Motor neuron (in vitro differentiated cells): ENCODE measurements at regions of chr9 and their contacts with region 1.

Region 1: DNA sequence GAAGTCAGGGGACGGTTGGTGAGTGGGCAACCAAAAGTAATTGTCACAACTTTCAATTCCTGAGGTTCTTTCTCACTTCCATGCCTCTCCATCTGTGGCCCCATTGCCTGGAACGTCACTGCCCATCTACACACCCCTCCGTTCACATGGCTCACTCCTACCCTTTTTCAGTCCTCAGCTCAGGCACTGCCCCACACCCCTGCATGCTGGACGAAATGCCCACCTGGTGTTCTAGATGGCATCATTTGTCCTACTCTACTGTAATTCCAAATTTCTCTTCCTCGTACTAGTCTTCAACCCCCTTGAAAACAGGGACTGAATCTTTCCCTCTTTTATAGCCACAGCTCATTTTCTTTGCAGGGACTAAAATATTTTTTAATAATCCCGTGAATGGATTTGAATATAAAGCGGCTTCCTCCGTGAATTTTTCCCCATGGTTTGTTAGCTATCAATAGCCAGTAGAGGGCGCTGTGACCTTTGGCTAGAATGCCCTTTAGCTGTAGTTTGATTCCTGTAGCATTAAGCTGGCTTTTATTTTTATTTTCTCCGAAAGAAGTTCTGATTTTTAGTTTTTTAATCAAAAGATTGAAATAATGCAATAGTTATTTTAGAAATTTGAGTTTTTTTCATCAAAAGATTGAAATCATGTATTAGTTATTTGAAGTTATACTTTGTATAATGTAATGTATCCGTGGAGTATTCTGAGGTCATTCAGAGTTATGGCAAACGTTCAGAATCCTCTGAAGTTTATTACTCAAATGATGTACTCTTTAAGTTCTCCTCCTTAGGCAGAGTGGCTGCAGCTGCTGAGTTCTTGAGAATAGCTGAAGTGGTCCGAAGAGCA is 232.1 kb downstream of the SH3GL2 start:
- ATAC-seq: peak in 5 of 8 experiments; percentile 35 to 63 (median 55)
- H3K4me3 ChIP-seq: no peak overlapping the region
- H3K27ac ChIP-seq: no peak overlapping the region
- H3K4me1 ChIP-seq: no peaks in the 10 kb centered on the region

Region 2: GRCh38 chr9:17380126-17380861 is 430.7 kb before region 1 on chr9:
- in situ Hi-C with region 1: no loop called
- ATAC-seq: no peak
- H3K4me3 ChIP-seq: no peak overlapping the region
- H3K27ac ChIP-seq: no peak overlapping the region
- H3K4me1 ChIP-seq: no peaks in the 10 kb centered on the region

Region 3: DNA sequence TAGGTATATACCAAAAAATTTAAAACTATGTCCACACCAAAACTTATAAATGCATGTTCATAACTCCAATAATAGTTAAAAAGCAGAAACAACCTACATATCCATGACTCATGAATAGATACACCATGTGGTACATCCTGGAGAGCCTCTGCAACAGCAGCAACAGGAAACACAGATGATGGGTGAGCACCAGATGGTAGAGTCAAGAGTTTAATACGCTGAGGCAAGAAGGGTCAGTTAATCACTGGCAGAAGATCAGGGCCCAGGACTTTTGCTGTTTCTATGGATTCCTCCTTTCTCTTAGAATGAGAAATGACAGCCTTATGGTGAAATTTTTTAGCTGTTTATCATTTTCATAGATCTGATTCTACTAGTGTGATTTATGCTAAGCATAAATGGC is 311.2 kb after region 1 on chr9:
- in situ Hi-C with region 1: no loop called
- ATAC-seq: peak in 1 of 8 experiments; percentile 31
- H3K4me3 ChIP-seq: no peak overlapping the region
- H3K27ac ChIP-seq: no peak overlapping the region
- H3K4me1 ChIP-seq: peaks cover 0 to 2% of the 10 kb centered on the region in 2 donors

Region 4: GRCh38 chr9:18208154-18209059 is 397.5 kb after region 1 on chr9:
- in situ Hi-C with region 1: loop called in 7 of 9 experiments (anchors 10 to 25 kb)
- ATAC-seq: peak in 4 of 8 experiments; percentile 40 to 67 (median 66)
- H3K4me3 ChIP-seq: no peak overlapping the region
- H3K27ac ChIP-seq: no peak overlapping the region
- H3K4me1 ChIP-seq: peaks cover 0 to 2% of the 10 kb centered on the region in 2 donors

Region 5: GRCh38 chr9:19048966-19049916 is 1238.3 kb after region 1 on chr9 and contains the start of gene RRAGA:
- in situ Hi-C with region 1: loop called in 3 of 9 experiments (anchors 25 kb)
- ATAC-seq: peak; percentile 84 to 93 (median 91)
- H3K4me3 ChIP-seq: peak within 1 kb of the TSS; percentile 72 to 91 (median 76)
- H3K27ac ChIP-seq: peak within 1 kb of the TSS; percentile 91 to 96
- H3K4me1 ChIP-seq: peaks cover 14 to 26% of the 10 kb centered on the region in 2 donors
- total RNA-seq, gene RRAGA: 34.9 to 68.4 (median 52.3) TPM